CD4-positive, alpha-beta T cell (primary cell): ENCODE measurements at regions of chr2 and their contacts with region 1.

Region 1: DNA sequence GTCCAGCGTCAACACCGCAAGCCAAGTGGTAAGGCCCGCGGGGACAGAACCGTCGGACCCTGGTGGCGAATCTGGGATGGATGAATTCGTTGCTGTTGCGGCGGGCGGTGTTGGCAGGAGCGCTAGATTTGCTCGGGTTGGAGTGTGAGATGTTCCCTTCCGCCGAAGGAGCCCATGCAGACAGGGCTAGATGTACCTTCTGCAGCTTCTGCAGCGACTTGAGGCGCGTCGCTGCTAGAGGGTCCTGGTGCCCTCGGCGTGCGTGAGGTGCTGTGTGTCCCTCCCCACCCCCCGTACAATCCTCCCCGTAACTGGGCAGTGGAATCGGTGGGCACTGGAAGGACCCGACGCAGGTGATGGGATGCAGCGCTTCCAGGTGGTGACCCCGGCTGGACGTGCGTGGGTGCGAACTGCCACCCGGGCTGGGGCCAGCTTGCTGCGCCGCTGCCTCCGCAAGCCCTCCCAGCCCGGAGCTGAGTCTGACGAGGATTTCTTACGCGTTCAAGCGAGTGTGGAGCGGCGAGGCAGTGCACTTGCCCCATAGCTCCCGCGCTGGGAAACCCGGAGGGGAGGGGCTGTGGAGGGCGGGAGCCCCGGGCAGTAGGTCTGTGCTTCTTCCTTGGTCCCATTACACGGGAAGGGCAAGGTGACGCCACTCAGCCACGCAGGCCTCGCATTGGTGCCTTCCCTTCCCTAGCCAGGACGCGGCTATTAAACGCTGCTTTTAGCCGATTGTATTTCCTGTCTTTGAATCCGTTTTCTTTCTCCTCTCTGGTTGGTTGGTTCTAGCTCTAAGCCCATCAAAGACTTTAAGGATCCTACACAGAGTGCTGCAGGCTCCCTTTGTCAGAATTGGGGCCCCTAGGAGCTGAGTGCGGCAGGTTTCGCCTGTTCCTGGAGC is 34.2 kb downstream of the CHRNA1 start:
- DNase-seq: peak in 9 of 14 experiments; percentile 12 to 68 (median 43)
- ATAC-seq: peak; percentile 77
- H3K4me3 ChIP-seq: peak overlapping the region; percentile 76
- H3K4me3 Mint-ChIP-seq: peak overlapping the region; percentile 90
- H3K27ac ChIP-seq: no peak overlapping the region
- H3K27ac Mint-ChIP-seq: no peak overlapping the region
- H3K4me1 ChIP-seq: peaks cover 27% of the 10 kb centered on the region
- H3K4me1 Mint-ChIP-seq: peaks cover 18% of the 10 kb centered on the region
- H3K27me3 ChIP-seq: peaks cover 3 to 4% of the 10 kb centered on the region in 2 experiments
- H3K27me3 Mint-ChIP-seq: peaks cover 33% of the 10 kb centered on the region
- CTCF ChIP-seq: no peak

Region 2: DNA sequence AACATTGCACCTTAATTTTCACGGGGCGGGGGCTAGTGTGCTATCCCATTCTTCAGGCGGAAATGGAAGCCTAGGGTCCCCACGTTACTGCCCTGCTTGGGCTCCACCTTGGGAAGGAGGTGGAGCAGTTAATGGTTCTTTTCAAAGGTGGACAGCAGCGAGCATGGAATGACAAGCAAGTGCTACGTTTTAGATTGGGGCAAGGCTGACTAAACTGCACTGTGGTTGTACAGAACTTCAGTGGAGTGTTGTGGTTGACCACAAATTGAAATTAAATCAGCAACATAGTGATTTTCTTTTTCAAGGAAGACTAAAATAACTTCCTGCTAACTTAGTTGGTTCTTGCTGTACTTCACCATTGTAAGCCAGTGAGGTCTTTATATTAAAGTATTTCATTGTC is 12.8 kb before region 1 on chr2:
- CTCF ChIA-PET with region 1: no interaction called
- POLR2A ChIA-PET with region 1: interaction called, 4 read pairs
- intact Hi-C with region 1: loop called in 1 of 2 experiments (anchors 1 kb)
- DNase-seq: peak in 4 of 14 experiments; percentile 46 to 67 (median 58)
- ATAC-seq: peak; percentile 78
- H3K4me3 ChIP-seq: peak overlapping the region; percentile 8
- H3K4me3 Mint-ChIP-seq: peak overlapping the region; percentile 43
- H3K27ac ChIP-seq: no peak overlapping the region
- H3K27ac Mint-ChIP-seq: no peak overlapping the region
- H3K4me1 ChIP-seq: peaks cover 29% of the 10 kb centered on the region
- H3K4me1 Mint-ChIP-seq: peaks cover 29% of the 10 kb centered on the region
- H3K27me3 ChIP-seq: no peaks in the 10 kb centered on the region
- H3K27me3 Mint-ChIP-seq: no peaks in the 10 kb centered on the region
- CTCF ChIP-seq: no peak